Activated T-helper 2 cell treated with anti-CD3 and anti-CD28 coated beads, Interferon-gamma antibody, Interleukin-2, Interleukin-4, amounts not matched to agents 10 μg/mL and 5 μg/mL and 100 μg/mL, durations not matched to agents 14 hours and 24 hours and 36 hours (primary cell): ENCODE measurements at regions of chr1 and their contacts with region 1.

Region 1: GRCh38 chr1:58783993-58784757 is at the start of gene JUN:
- DNase-seq: peak; percentile 96
- H3K4me3 Mint-ChIP-seq: peak within 1 kb of the TSS; percentile 91
- H3K27ac Mint-ChIP-seq: peak within 1 kb of the TSS; percentile 93
- H3K4me1 Mint-ChIP-seq: peaks cover 21% of the 10 kb centered on the region
- H3K27me3 Mint-ChIP-seq: peaks cover 16% of the 10 kb centered on the region
- total RNA-seq, gene JUN: 29.5 and 30.2 TPM in 2 replicates

Region 2: DNA sequence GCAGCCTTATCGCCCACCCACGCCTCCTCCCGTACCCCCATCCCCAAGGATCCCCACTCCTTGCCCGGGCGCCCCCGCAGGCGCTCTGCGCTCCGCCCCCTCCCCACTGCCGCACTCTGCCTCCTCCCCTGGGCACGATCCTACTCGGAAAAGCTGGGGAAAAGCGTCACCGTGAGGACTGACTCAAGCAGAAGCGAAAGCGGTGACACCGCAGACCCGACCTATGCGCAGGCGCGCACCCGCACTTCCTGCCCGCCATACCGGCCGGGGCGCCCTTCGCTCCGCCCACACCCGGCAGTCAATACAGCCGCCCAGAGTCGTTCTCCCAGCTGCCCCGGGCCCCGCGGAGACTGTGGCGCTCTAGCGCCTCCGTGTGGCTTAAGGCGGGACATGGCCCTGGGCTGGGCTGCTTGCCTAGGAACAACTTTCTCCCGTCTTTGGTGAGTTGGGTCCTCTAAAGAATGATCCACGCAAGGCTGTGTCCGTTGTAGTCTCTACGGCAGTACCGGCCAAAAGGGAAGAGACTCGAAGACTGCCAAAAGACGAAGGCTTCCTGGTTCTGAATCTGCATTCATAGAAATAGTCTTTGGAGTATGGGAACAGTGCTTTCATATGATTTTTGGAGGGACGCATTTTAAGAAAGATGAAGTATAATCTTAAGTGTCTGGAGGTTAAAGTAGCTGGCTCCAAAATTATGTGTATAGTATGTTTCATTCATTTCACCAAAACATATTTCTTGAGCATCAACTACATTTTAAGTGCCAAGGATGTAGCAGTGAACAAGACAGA is 237.5 kb before region 1 on chr1 and contains the start of gene OMA1:
- intact Hi-C with region 1: loop called (anchors 1 kb)
- DNase-seq: peak; percentile 97
- H3K4me3 Mint-ChIP-seq: peak within 1 kb of the TSS; percentile 89
- H3K27ac Mint-ChIP-seq: peak within 1 kb of the TSS; percentile 96
- H3K4me1 Mint-ChIP-seq: peaks cover 21% of the 10 kb centered on the region
- H3K27me3 Mint-ChIP-seq: peaks cover 17% of the 10 kb centered on the region
- total RNA-seq, gene OMA1: 10.2 and 10.3 TPM in 2 replicates

Region 3: GRCh38 chr1:58768971-58769808 is 15.0 kb before region 1 on chr1:
- intact Hi-C with region 1: no loop called
- DNase-seq: no peak
- H3K4me3 Mint-ChIP-seq: no peak overlapping the region
- H3K27ac Mint-ChIP-seq: no peak overlapping the region
- H3K4me1 Mint-ChIP-seq: peaks cover 12% of the 10 kb centered on the region
- H3K27me3 Mint-ChIP-seq: peaks cover 3% of the 10 kb centered on the region

Region 4: GRCh38 chr1:58816072-58816746 is 32.0 kb after region 1 on chr1:
- intact Hi-C with region 1: loop called (anchors 1 kb)
- DNase-seq: peak; percentile 85
- H3K4me3 Mint-ChIP-seq: peak overlapping the region; percentile 76
- H3K27ac Mint-ChIP-seq: peak overlapping the region; percentile 73
- H3K4me1 Mint-ChIP-seq: peaks cover 43% of the 10 kb centered on the region
- H3K27me3 Mint-ChIP-seq: peaks cover 7% of the 10 kb centered on the region

Region 5: GRCh38 chr1:59007820-59008598 is 223.8 kb after region 1 on chr1:
- intact Hi-C with region 1: loop called (anchors 5 kb)
- DNase-seq: no peak
- H3K4me3 Mint-ChIP-seq: no peak overlapping the region
- H3K27ac Mint-ChIP-seq: peak overlapping the region; percentile 85
- H3K4me1 Mint-ChIP-seq: peaks cover 55% of the 10 kb centered on the region
- H3K27me3 Mint-ChIP-seq: no peaks in the 10 kb centered on the region

Region 6: GRCh38 chr1:59143133-59143487 is 358.9 kb after region 1 on chr1:
- intact Hi-C with region 1: loop called (anchors 1 kb)
- DNase-seq: no peak
- H3K4me3 Mint-ChIP-seq: no peak overlapping the region
- H3K27ac Mint-ChIP-seq: peak overlapping the region; percentile 62
- H3K4me1 Mint-ChIP-seq: peaks cover 59% of the 10 kb centered on the region
- H3K27me3 Mint-ChIP-seq: no peaks in the 10 kb centered on the region

Region 7: DNA sequence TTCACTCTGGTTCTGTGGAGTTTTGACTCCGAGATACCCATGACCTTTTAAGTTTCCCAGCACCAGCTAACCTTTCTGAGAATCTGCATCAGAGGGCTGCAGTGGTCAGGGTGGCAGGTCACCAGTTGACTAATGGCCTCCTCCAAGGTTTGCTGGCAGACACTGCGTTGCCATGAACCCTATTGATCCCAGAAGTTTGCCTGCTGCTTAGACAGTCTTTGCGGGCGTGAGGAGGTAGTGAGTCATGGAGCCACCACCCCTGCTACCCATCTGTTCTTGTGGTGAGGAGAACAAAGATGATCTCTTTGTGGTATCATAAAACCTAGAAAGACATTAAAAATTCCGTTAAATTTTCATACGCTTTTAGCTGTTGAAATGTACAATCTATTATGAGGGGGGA is 693.1 kb after region 1 on chr1:
- intact Hi-C with region 1: loop called (anchors 1 kb)
- DNase-seq: peak; percentile 40
- H3K4me3 Mint-ChIP-seq: peak overlapping the region; percentile 54
- H3K27ac Mint-ChIP-seq: peak overlapping the region; percentile 91
- H3K4me1 Mint-ChIP-seq: peaks cover 21% of the 10 kb centered on the region
- H3K27me3 Mint-ChIP-seq: no peaks in the 10 kb centered on the region